Activated B cell treated with CpG ODN at 0.5 μM for 24 hours (primary cell): ENCODE measurements at regions of chr11 and their contacts with region 1.

Region 1: DNA sequence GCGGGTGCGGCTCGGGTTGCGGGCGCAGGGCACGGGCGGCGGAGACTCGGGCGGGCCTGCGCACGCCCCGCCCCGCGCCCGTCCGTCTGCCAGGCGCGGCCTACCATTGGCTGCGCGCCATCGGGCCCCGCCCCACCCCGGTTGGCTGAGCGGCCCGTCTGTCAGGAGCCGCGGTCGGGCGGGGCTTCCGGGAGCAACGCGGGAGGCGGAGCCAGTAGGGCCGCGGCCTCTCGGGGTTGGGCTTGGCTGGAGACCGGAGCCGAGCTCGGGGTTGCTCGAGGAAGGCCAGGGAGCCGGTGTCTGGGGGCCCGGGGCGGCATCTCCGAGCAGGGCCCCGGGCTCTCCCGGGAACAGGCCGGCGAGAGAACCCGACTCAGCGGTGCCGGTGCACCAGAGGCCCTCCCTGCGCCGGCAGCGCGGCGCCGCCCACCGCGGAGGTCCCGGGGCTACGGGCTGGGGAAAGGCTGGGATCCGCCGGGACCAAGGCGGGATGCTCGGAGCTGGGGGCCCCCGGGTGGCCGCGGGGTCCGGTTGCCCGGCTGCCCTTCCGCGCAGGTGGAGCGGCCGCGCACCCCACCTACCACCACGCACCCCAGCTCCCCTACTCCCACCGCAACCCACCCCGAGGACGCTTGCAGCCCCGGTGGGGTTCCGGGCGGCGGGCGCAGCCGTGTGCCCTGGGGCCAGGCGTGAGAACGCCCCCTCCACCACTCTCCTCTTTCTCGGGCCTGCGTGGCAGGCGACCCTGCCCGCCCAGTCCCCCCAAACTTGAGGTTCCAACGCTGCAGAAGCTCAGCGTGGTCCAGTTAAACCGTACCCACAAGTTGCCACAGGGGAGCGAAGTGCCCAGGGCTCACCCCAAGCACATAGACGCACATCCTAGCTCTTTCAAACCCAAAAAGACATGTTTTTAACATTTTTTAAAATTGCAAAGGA is at the start of gene HRAS:
- DNase-seq: peak; percentile 98
- ATAC-seq: peak; percentile 78
- H3K4me3 Mint-ChIP-seq: peak within 1 kb of the TSS; percentile 90
- H3K27ac Mint-ChIP-seq: peak within 1 kb of the TSS; percentile 96
- H3K4me1 Mint-ChIP-seq: peaks cover 26% of the 10 kb centered on the region
- H3K27me3 Mint-ChIP-seq: no peaks in the 10 kb centered on the region
- CTCF ChIP-seq: no peak
- total RNA-seq, gene HRAS: 37.2 and 43.9 TPM in 2 replicates

Region 2: GRCh38 chr11:207208-207862 is 328.5 kb before region 1 on chr11 and contains the starts of genes BET1L and RIC8A:
- CTCF ChIA-PET with region 1: no interaction called
- POLR2A ChIA-PET with region 1: interaction called, 21 read pairs
- intact Hi-C with region 1: loop called (anchors 1 kb)
- DNase-seq: peak; percentile 95
- ATAC-seq: peak; percentile 82
- H3K4me3 Mint-ChIP-seq: peak within 1 kb of the TSS; percentile 97
- H3K27ac Mint-ChIP-seq: peak within 1 kb of the TSS; percentile 99
- H3K4me1 Mint-ChIP-seq: peaks cover 46% of the 10 kb centered on the region
- H3K27me3 Mint-ChIP-seq: no peaks in the 10 kb centered on the region
- CTCF ChIP-seq: no peak
- total RNA-seq, gene BET1L: 44.2 and 47.0 TPM in 2 replicates
- total RNA-seq, gene RIC8A: 108 and 114 TPM in 2 replicates

Region 3: GRCh38 chr11:370087-371055 is 165.4 kb before region 1 on chr11:
- CTCF ChIA-PET with region 1: no interaction called
- POLR2A ChIA-PET with region 1: no interaction called
- intact Hi-C with region 1: no loop called
- DNase-seq: no peak
- ATAC-seq: no peak
- H3K4me3 Mint-ChIP-seq: peak overlapping the region; percentile 60
- H3K27ac Mint-ChIP-seq: no peak overlapping the region
- H3K4me1 Mint-ChIP-seq: peaks cover 12% of the 10 kb centered on the region
- H3K27me3 Mint-ChIP-seq: peaks cover 29% of the 10 kb centered on the region
- CTCF ChIP-seq: no peak

Region 4: DNA sequence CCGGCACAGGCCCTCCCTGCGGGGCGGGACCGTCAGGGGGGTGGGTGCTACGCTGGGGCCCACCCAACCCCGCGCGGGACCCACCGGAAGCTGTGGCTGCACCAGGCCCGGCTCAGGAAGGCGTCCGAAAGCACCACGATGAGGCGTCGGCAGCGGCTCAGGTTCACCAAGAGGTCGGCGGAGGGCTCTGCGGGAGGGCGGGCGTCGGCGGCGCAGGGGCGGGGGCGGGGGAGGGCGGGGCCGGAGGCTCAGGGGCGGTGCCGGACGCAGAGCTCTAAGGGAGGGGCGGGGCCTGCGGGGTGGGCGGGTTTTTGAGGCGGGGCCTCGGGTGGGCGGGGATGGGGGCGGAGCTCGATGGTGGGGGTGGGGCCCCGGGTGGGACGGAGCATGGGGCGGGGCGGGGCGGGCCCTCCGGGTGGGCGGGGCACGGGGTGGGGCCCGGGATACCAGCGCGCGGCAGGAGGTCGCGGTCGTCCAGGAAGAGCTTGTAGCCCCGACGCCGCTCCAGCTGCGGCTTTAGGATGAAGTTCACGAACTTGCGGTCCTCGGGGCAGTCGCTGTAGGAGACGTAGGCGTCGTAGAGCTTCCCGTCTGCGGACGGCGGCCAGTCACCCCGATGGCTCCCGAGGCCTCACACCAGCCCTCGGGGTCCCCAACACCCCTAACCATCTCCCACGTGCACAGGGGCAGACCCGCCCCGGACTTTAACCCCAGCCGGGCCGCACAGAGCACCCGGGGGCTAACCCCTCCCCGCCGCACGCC is 128.6 kb before region 1 on chr11:
- CTCF ChIA-PET with region 1: no interaction called
- POLR2A ChIA-PET with region 1: interaction called, 20 read pairs
- intact Hi-C with region 1: no loop called
- DNase-seq: peak; percentile 76
- ATAC-seq: peak; percentile 85
- H3K4me3 Mint-ChIP-seq: peak overlapping the region; percentile 60
- H3K27ac Mint-ChIP-seq: peak overlapping the region; percentile 35
- H3K4me1 Mint-ChIP-seq: peaks cover 3% of the 10 kb centered on the region
- H3K27me3 Mint-ChIP-seq: no peaks in the 10 kb centered on the region
- CTCF ChIP-seq: no peak

Region 5: DNA sequence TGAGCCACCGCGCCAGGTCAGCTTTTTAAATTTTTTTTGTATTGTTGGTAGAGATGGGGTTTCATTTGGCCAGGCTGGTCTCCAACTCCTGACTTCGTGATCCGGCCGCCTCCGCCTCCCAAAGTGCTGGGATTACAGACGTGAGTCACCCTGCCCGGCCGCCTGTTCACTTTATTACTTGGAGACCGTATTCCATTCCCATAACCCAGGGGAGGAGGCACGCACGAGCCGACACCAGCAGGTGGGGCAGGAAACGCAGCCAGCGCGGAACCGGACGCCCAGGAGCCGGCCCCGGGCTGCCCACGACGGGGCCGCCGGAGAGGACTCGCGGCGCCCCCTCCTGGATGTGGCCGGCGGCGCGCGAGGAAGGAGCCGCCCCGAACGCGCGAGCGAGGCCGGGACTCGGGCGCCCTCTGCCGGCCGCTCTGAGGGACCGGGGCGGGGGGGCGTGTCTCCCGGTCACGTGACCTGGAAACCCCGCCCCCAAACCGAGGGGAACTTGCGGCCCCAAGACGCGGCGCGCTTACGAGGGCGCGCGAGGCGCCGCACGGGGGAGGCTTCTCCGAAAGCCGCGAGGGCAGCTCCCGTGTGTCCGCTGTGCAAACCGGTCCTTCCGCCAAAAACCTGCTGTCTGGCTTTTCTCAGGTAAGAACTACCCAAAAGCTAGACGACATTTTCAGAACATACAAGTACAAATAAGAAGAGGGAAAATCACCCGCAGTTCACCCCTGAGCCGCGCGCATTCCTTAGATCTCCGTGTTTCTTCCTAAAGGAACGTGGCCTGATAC is 17.1 kb before region 1 on chr11:
- CTCF ChIA-PET with region 1: interaction called, 7 read pairs
- POLR2A ChIA-PET with region 1: interaction called, 8 read pairs
- intact Hi-C with region 1: loop called (anchors 1 kb)
- DNase-seq: peak; percentile 90
- ATAC-seq: peak; percentile 98
- H3K4me3 Mint-ChIP-seq: peak overlapping the region; percentile 79
- H3K27ac Mint-ChIP-seq: peak overlapping the region; percentile 83
- H3K4me1 Mint-ChIP-seq: peaks cover 5% of the 10 kb centered on the region
- H3K27me3 Mint-ChIP-seq: no peaks in the 10 kb centered on the region
- CTCF ChIP-seq: peak; percentile 71

Region 6: GRCh38 chr11:568306-569157 is 32.7 kb after region 1 on chr11:
- CTCF ChIA-PET with region 1: no interaction called
- POLR2A ChIA-PET with region 1: interaction called, 3 read pairs
- intact Hi-C with region 1: loop called (anchors 2 kb)
- DNase-seq: peak; percentile 96
- ATAC-seq: peak; percentile 93
- H3K4me3 Mint-ChIP-seq: peak overlapping the region; percentile 79
- H3K27ac Mint-ChIP-seq: peak overlapping the region; percentile 41
- H3K4me1 Mint-ChIP-seq: peaks cover 7% of the 10 kb centered on the region
- H3K27me3 Mint-ChIP-seq: no peaks in the 10 kb centered on the region
- CTCF ChIP-seq: no peak

Region 7: DNA sequence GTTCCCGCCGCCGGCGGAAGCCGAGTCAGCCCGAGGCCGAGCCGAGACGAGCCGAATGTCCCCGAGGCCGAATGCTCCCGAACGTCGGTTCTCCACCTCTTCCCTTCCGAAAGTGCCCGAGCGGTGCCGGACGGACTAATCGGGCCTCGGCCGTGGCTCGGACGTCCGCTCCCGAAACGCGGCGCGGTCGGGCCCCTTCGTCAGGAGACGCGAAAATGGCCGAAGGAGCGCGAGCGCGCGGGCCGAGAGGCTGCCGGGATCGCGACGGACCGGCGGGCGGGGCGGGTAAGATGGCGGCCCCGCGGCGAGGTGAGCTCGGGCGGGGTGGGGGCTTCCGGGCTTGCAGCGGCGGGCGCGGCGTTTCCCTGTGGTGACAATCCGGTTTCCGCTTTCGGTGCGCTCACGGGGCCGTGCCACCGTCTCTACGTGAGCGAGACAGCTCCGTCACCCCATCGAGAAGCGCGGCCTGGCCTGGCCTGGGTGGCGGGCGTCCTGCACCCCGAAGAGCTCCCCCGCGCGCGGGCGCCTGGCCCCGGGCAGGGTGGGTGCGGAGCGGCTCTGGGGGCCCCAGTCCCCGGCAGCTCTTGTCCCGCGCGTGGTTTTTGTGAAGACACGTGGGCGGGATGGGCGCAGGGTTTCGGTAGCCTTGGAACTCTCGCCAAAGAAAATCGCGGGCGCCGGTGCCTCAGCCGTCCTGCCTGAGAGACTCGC is 159.9 kb after region 1 on chr11 and contains the start of gene TMEM80:
- CTCF ChIA-PET with region 1: no interaction called
- POLR2A ChIA-PET with region 1: interaction called, 15 read pairs
- intact Hi-C with region 1: loop called (anchors 1 kb)
- DNase-seq: peak; percentile 95
- ATAC-seq: peak; percentile 71
- H3K4me3 Mint-ChIP-seq: peak within 1 kb of the TSS; percentile 87
- H3K27ac Mint-ChIP-seq: peak within 1 kb of the TSS; percentile 94
- H3K4me1 Mint-ChIP-seq: peaks cover 46% of the 10 kb centered on the region
- H3K27me3 Mint-ChIP-seq: no peaks in the 10 kb centered on the region
- CTCF ChIP-seq: no peak
- total RNA-seq, gene TMEM80: 34.1 and 44.4 TPM in 2 replicates

Region 8: GRCh38 chr11:803770-804598 is 268.2 kb after region 1 on chr11:
- CTCF ChIA-PET with region 1: no interaction called
- POLR2A ChIA-PET with region 1: interaction called, 6 read pairs
- intact Hi-C with region 1: loop called (anchors 2 kb)
- DNase-seq: no peak
- ATAC-seq: no peak
- H3K4me3 Mint-ChIP-seq: peak overlapping the region; percentile 68
- H3K27ac Mint-ChIP-seq: no peak overlapping the region
- H3K4me1 Mint-ChIP-seq: peaks cover 22% of the 10 kb centered on the region
- H3K27me3 Mint-ChIP-seq: no peaks in the 10 kb centered on the region
- CTCF ChIP-seq: no peak

Region 9: DNA sequence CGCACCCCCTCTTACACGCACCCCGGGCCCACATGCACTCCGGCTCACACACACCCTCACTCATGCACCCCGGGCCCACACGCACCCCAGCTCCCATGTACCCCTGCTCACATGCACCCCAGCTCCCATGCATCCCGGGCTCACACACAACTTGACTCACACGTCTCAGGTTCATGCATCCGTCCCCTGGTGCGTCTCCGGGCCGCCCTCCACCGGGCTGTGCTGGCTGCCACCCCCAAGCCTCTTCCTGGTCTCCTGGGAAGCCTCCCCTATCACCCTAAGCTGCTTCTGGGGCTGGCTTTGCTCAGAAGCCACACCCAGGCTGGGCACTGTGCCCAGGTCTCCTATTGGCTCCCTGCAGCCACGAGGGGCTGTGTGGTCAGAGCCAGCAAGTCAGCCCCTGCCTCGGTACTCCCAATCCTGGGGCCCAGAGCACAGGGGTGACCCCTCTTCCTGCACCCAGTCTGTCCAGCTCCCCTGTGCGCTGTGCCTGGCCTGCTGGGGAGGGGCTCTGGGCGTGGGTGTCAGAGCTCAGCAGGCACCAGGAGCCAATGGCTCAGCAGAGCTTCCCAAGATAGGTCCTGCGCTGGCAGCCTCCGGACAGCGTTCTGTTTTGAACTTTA is 323.8 kb after region 1 on chr11:
- CTCF ChIA-PET with region 1: no interaction called
- POLR2A ChIA-PET with region 1: no interaction called
- intact Hi-C with region 1: no loop called
- DNase-seq: no peak
- ATAC-seq: no peak
- H3K4me3 Mint-ChIP-seq: no peak overlapping the region
- H3K27ac Mint-ChIP-seq: no peak overlapping the region
- H3K4me1 Mint-ChIP-seq: no peaks in the 10 kb centered on the region
- H3K27me3 Mint-ChIP-seq: no peaks in the 10 kb centered on the region
- CTCF ChIP-seq: no peak